HCT116 (cell line): ENCODE measurements at regions of chr18 and their contacts with region 1.

Region 1: GRCh38 chr18:50203801-50204604 is 9.1 kb upstream of the MYO5B start:
- DNase-seq: peak; percentile 49
- ATAC-seq: peak; percentile 95
- H3K4me3 ChIP-seq: peak overlapping the region; percentile 28 to 43
- H3K27ac ChIP-seq: no peak overlapping the region
- H3K4me1 ChIP-seq: peaks cover 0 to 14% of the 10 kb centered on the region in 2 experiments; a peak in 1 of 4 replicates
- H3K27me3 ChIP-seq: no peaks in the 10 kb centered on the region
- CTCF ChIP-seq: peak; percentile 61 to 84 (median 74)
- POLR2A ChIP-seq: no peak
- RAD21 ChIP-seq: peak; percentile 88

Region 2: GRCh38 chr18:49899657-49900330 is 304.2 kb before region 1 on chr18:
- CTCF ChIA-PET with region 1: interaction called, 3 read pairs
- POLR2A ChIA-PET with region 1: no interaction called
- RAD21 ChIA-PET with region 1: no interaction called
- intact Hi-C with region 1: loop called (anchors 2 kb)
- DNase-seq: no peak
- ATAC-seq: peak; percentile 74
- H3K4me3 ChIP-seq: no peak overlapping the region
- H3K27ac ChIP-seq: no peak overlapping the region
- H3K4me1 ChIP-seq: no peaks in the 10 kb centered on the region
- H3K27me3 ChIP-seq: no peaks in the 10 kb centered on the region
- CTCF ChIP-seq: peak in 2 of 3 experiments; percentile 34 to 43; a peak in 4 of 6 replicates
- POLR2A ChIP-seq: no peak
- RAD21 ChIP-seq: peak; percentile 26

Region 3: DNA sequence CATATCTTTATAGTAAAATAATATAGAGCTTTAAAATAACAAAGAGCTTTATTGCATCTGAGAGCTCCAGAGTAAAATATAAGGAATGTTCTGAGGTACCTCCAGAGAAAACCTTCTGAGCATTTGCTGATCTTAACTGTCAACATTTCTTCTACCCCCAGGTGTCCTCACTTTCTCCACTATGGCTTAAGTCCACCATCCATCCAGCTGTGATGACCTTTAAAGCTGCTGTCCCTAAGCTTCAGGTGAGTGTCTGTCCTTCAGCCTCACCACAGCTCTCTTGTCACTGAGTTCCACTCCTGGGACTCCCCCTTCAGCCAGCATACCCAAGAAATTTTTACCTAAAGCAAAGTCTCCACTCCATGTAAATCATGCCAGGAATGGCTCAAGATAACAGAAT is 147.0 kb before region 1 on chr18:
- CTCF ChIA-PET with region 1: interaction called, 15 read pairs
- POLR2A ChIA-PET with region 1: no interaction called
- RAD21 ChIA-PET with region 1: no interaction called
- intact Hi-C with region 1: no loop called
- DNase-seq: no peak
- ATAC-seq: no peak
- H3K4me3 ChIP-seq: no peak overlapping the region
- H3K27ac ChIP-seq: no peak overlapping the region
- H3K4me1 ChIP-seq: no peaks in the 10 kb centered on the region
- H3K27me3 ChIP-seq: no peaks in the 10 kb centered on the region
- CTCF ChIP-seq: peak in 1 of 3 experiments; percentile 19; a peak in 1 of 6 replicates
- POLR2A ChIP-seq: no peak
- RAD21 ChIP-seq: peak; percentile 39

Region 4: GRCh38 chr18:50218432-50219197 is 14.6 kb after region 1 on chr18:
- CTCF ChIA-PET with region 1: interaction called, 10 read pairs
- POLR2A ChIA-PET with region 1: no interaction called
- RAD21 ChIA-PET with region 1: no interaction called
- intact Hi-C with region 1: no loop called
- DNase-seq: peak; percentile 33
- ATAC-seq: peak; percentile 97
- H3K4me3 ChIP-seq: no peak overlapping the region
- H3K27ac ChIP-seq: no peak overlapping the region
- H3K4me1 ChIP-seq: no peaks in the 10 kb centered on the region
- H3K27me3 ChIP-seq: no peaks in the 10 kb centered on the region
- CTCF ChIP-seq: peak; percentile 55 to 67 (median 66)
- POLR2A ChIP-seq: no peak
- RAD21 ChIP-seq: peak; percentile 68

Region 5: DNA sequence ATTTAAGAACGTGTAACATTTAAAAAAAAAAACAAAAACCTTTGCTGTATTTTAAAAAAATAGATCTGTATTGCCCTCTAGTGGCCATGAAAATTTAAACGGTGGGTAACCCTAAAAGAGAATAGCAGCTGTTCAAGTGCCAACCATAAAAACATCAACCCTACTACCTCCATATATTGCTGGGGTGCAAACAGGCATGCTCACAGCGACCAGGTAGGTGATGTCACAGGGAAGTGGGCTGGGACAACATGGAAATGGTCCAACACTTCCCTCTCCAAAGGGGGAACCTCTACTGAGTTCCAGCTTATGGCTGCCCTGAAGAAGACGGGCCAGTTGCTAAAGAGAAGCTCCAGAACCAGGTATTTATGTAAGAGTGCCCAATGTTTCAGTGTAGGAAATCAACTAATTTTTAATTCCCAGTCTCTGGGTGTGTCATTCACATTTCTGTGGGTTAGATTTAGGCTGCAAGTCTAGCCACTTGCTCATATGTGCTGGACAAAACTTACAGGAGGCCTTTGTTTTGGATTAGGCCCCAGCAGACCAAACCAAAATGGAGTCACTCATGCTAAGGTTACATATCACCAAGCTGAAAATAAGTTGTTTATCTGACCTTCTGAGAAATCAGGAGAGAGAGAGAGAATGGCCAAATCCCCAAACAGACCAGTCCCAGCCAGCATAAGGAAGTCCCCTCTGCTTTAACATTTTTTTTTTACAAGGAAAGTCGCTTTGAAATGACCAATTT is 225.4 kb after region 1 on chr18:
- CTCF ChIA-PET with region 1: interaction called, 17 read pairs
- POLR2A ChIA-PET with region 1: no interaction called
- RAD21 ChIA-PET with region 1: no interaction called
- intact Hi-C with region 1: no loop called
- DNase-seq: peak; percentile 39
- ATAC-seq: peak; percentile 72
- H3K4me3 ChIP-seq: no peak overlapping the region
- H3K27ac ChIP-seq: no peak overlapping the region
- H3K4me1 ChIP-seq: no peaks in the 10 kb centered on the region
- H3K27me3 ChIP-seq: no peaks in the 10 kb centered on the region
- CTCF ChIP-seq: peak; percentile 32 to 49 (median 37); a peak in 4 of 6 replicates
- POLR2A ChIP-seq: no peak
- RAD21 ChIP-seq: peak; percentile 45; the same call in 1 of the 2 replicates